HEK293 (cell line): ENCODE measurements at regions of chr4 and their contacts with region 1.

Region 1: GRCh38 chr4:81913427-81913879 is 441.7 kb upstream of the RASGEF1B start:
- H3K4me3 ChIP-seq: no peak overlapping the region
- H3K27ac ChIP-seq: no peak overlapping the region
- H3K4me1 ChIP-seq: peaks cover 2% of the 10 kb centered on the region; the same call in 1 of the 2 replicates
- CTCF ChIP-seq: 0 out of 2 replicates have a peak, but pooled peaks have one; percentile 36

Region 2: GRCh38 chr4:81903212-81903611 is 10.2 kb before region 1 on chr4:
- CTCF ChIA-PET with region 1: interaction called, 19 read pairs
- POLR2A ChIA-PET with region 1: no interaction called
- H3K4me3 ChIP-seq: no peak overlapping the region
- H3K27ac ChIP-seq: no peak overlapping the region
- H3K4me1 ChIP-seq: no peaks in the 10 kb centered on the region
- CTCF ChIP-seq: no peak

Region 3: GRCh38 chr4:81954271-81954670 is 40.8 kb after region 1 on chr4:
- CTCF ChIA-PET with region 1: no interaction called
- POLR2A ChIA-PET with region 1: no interaction called
- H3K4me3 ChIP-seq: no peak overlapping the region
- H3K27ac ChIP-seq: no peak overlapping the region
- H3K4me1 ChIP-seq: no peaks in the 10 kb centered on the region
- CTCF ChIP-seq: no peak

Region 4: GRCh38 chr4:82044142-82044993 is 130.9 kb after region 1 on chr4:
- CTCF ChIA-PET with region 1: no interaction called
- POLR2A ChIA-PET with region 1: no interaction called
- H3K4me3 ChIP-seq: peak overlapping the region; percentile 33
- H3K27ac ChIP-seq: no peak overlapping the region; the same call in 1 of the 2 replicates
- H3K4me1 ChIP-seq: no peaks in the 10 kb centered on the region
- CTCF ChIP-seq: no peak

Region 5: GRCh38 chr4:82057990-82058544 is 144.6 kb after region 1 on chr4:
- CTCF ChIA-PET with region 1: no interaction called
- POLR2A ChIA-PET with region 1: no interaction called
- H3K4me3 ChIP-seq: no peak overlapping the region
- H3K27ac ChIP-seq: no peak overlapping the region
- H3K4me1 ChIP-seq: no peaks in the 10 kb centered on the region
- CTCF ChIP-seq: no peak